ENCODE measurements at regions of chr3 and their contacts with region 1.

Region 1: DNA sequence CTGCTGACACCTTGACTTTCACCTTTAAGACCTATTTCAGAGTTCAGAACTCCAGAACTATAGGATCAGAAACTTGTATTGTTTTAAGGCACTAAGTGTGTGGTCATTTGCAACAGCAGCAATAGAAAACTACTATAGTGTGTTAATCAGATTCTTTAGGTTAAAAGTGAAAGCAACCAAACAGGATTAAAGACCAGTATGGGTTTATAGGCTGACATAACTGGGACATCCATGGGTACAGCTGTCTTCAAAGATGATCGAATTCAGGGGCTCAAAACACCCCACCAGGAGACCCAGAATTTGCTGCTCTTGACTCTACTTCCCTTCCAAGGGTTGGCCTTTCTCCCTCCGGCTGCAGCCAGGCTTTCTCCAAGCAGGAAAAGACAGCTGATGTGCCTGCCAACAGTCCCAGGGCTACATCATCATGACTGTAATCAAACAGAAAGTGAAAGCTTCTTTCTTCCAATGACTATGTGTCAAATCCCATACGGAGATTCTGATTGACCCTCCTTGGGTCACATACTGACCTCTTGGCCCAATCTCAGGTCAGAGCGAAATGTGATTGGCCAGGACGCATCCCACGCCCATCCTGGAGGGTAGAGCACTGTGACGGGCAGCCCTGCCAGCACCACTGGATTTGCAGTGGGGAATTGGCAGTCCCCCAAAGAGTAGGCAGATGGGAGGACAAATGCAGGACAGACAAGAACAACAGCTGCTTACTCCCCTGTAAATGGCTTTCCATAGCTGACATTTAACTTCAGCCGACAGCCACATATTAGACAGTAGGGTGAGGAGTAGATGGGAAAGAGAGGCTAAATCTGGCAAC is 51.4 kb upstream of the RNF7 start:
- DNase-seq: no peak
- H3K4me3 Mint-ChIP-seq: peak overlapping the region; percentile 53
- H3K27ac Mint-ChIP-seq: no peak overlapping the region
- H3K4me1 Mint-ChIP-seq: peaks cover 13% of the 10 kb centered on the region
- H3K27me3 Mint-ChIP-seq: no peaks in the 10 kb centered on the region

Region 2: GRCh38 chr3:141619450-141619849 is 67.2 kb before region 1 on chr3:
- CTCF ChIA-PET with region 1: no interaction called
- POLR2A ChIA-PET with region 1: no interaction called
- intact Hi-C with region 1: loop called (anchors 10 kb)
- DNase-seq: no peak
- H3K4me3 Mint-ChIP-seq: no peak overlapping the region
- H3K27ac Mint-ChIP-seq: no peak overlapping the region
- H3K4me1 Mint-ChIP-seq: no peaks in the 10 kb centered on the region
- H3K27me3 Mint-ChIP-seq: no peaks in the 10 kb centered on the region

Region 3: GRCh38 chr3:141699897-141700296 is 13.2 kb after region 1 on chr3:
- CTCF ChIA-PET with region 1: no interaction called
- POLR2A ChIA-PET with region 1: no interaction called
- intact Hi-C with region 1: no loop called
- DNase-seq: no peak
- H3K4me3 Mint-ChIP-seq: no peak overlapping the region
- H3K27ac Mint-ChIP-seq: no peak overlapping the region
- H3K4me1 Mint-ChIP-seq: no peaks in the 10 kb centered on the region
- H3K27me3 Mint-ChIP-seq: no peaks in the 10 kb centered on the region